ENCODE measurements at regions of chr1 and their contacts with region 1.

Region 1: DNA sequence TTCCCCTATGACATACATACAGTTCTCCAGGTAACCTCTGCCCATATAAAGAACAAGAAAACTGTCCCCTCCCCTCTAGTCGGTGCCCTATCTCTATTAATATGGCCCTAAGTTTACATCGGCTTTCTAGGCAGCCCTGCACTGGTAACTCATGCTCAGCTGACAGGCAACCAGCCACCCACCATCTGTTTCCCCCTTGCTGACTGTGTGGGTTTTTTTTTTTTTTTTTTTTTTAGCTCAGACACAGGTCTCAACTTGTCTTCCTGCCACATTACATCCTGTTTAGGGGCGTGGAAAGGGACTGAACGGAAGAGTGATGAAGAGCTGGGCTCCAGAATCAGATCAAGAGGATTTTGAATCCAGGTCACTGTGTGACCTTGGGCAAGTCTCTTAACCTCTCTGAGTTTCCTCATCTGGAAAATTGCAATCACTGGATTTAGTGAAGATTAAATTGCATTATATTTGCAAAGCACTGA is 14.0 kb downstream of the LAPTM5 start:
- DNase-seq: peak; percentile 32 to 90 (median 74)
- ATAC-seq: peak; percentile 79 to 86 (median 82)
- H3K4me3 ChIP-seq: peak overlapping the region; percentile 32 to 58
- H3K4me3 Mint-ChIP-seq: peak overlapping the region; percentile 50 to 98 (median 80)
- H3K27ac ChIP-seq: peak overlapping the region; percentile 79
- H3K27ac Mint-ChIP-seq: peak overlapping the region; percentile 96 to 98
- H3K4me1 ChIP-seq: peaks cover 75 to 100% of the 10 kb centered on the region in 2 experiments
- H3K4me1 Mint-ChIP-seq: peaks cover 96 to 99% (median 99%) of the 10 kb centered on the region in 3 donors
- H3K27me3 ChIP-seq: no peaks in the 10 kb centered on the region
- H3K27me3 Mint-ChIP-seq: no peaks in the 10 kb centered on the region

Region 2: GRCh38 chr1:30732277-30732996 is 11.2 kb before region 1 on chr1:
- CTCF ChIA-PET with region 1: interaction called in 1 of 2 experiments, 13 read pairs
- POLR2A ChIA-PET with region 1: interaction called in 1 of 2 experiments, 7 read pairs
- DNase-seq: peak in 1 of 35 experiments; percentile 49
- ATAC-seq: peak; percentile 33 to 59 (median 51)
- H3K4me3 ChIP-seq: no peak overlapping the region
- H3K4me3 Mint-ChIP-seq: peak overlapping the region in 1 of 3 donors; percentile 58
- H3K27ac ChIP-seq: peak overlapping the region; percentile 33
- H3K27ac Mint-ChIP-seq: peak overlapping the region; percentile 70 to 72
- H3K4me1 ChIP-seq: peaks cover 0 to 31% of the 10 kb centered on the region in 2 experiments
- H3K4me1 Mint-ChIP-seq: peaks cover 18 to 43% (median 26%) of the 10 kb centered on the region in 3 donors
- H3K27me3 ChIP-seq: no peaks in the 10 kb centered on the region
- H3K27me3 Mint-ChIP-seq: no peaks in the 10 kb centered on the region

Region 3: DNA sequence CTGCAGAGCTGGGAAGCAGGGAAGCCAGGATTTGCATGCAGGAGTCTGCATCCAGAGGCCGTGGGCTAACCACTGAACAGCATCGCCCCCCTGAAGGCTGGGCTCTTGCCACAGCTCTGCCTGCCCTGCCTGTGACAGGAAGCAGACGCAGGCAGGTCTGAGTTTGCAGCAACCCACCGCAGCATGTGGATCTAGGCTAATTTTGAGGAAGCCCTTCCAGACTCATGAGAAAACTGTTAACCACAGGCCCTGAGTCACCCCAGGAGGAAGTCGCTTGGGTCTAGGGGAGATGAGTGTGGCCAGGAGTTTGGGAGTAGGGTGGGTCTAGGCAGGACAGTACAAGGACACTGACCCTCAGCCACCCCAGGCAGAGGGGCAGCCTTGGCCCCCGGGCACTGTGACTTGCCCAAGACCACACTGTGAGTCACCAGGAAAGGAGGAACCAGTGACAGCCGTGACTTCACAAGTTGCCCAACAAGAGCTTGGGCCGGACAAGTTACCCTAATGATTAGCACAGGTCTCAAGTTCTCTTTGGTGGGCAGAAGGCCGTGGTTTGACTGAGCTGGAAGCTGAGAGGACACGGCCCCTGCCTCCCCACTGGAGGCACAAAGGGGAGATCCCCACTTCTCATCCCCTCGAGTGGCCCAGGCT is 13.0 kb after region 1 on chr1:
- CTCF ChIA-PET with region 1: interaction called in 1 of 2 experiments, 44 read pairs
- POLR2A ChIA-PET with region 1: interaction called, 20 to 27 read pairs
- DNase-seq: peak; percentile 43 to 83 (median 70)
- ATAC-seq: peak; percentile 65 to 71 (median 68)
- H3K4me3 ChIP-seq: peak overlapping the region; percentile 72 to 94
- H3K4me3 Mint-ChIP-seq: peak overlapping the region; percentile 98 to 100 (median 99)
- H3K27ac ChIP-seq: peak overlapping the region; percentile 79
- H3K27ac Mint-ChIP-seq: peak overlapping the region; percentile 96 to 98
- H3K4me1 ChIP-seq: peaks cover 65 to 86% of the 10 kb centered on the region in 2 experiments
- H3K4me1 Mint-ChIP-seq: peaks cover 77 to 94% (median 87%) of the 10 kb centered on the region in 3 donors
- H3K27me3 ChIP-seq: no peaks in the 10 kb centered on the region
- H3K27me3 Mint-ChIP-seq: no peaks in the 10 kb centered on the region

Region 4: DNA sequence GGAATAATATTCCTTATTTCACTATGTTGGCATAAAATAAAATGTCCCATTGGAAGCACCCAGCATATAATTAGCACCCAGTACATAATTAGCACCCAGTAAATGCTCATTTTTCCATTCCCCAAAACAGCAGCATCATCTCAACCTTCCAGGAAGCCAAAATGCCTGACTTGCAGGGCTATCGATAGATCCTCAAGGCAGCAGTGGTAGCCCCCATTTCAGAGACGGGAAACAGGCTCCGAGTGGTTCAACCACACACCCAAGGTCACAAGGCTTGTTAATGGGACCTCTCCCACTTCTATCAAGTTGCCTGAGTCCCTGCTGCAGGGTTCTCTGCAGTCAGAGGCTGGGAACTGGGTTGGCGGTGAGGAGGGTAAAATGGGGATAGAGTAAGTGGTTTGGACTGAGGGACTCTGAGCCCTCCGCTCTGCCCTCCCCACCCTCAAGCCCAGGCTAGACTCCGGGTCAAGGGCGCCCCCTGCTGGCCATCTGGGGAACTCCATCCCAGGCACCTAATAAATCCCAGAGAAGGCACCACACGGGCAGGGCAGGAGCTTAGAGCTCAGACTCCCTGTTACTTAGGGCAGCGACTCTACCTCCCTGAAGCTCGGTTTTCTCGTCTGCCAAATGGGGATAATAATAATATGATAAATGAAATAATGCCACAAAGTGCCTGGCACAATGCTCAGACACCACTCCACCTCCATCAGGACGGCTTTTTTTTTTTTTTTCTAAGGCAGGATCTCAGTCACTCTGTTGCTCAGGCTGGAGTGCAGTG is 35.9 kb after region 1 on chr1:
- CTCF ChIA-PET with region 1: interaction called, 10 to 39 read pairs
- POLR2A ChIA-PET with region 1: no interaction called
- DNase-seq: peak; percentile 66 to 95 (median 86)
- ATAC-seq: peak; percentile 75 to 92 (median 80)
- H3K4me3 ChIP-seq: no peak overlapping the region
- H3K4me3 Mint-ChIP-seq: peak overlapping the region in 1 of 3 donors; percentile 17
- H3K27ac ChIP-seq: no peak overlapping the region
- H3K27ac Mint-ChIP-seq: peak overlapping the region in 1 of 2 donors; percentile 58
- H3K4me1 ChIP-seq: peaks cover 4 to 19% of the 10 kb centered on the region in 2 experiments
- H3K4me1 Mint-ChIP-seq: peaks cover 13 to 21% (median 21%) of the 10 kb centered on the region in 3 donors
- H3K27me3 ChIP-seq: peaks cover 0 to 17% of the 10 kb centered on the region in 2 experiments
- H3K27me3 Mint-ChIP-seq: peaks cover 0 to 1% of the 10 kb centered on the region in 2 donors